Naive thymus-derived CD8-positive, alpha-beta T cell (primary cell): ENCODE measurements at regions of chr4 and their contacts with region 1.

Region 1: GRCh38 chr4:184538023-184538599 is 63.8 kb upstream of the IRF2 start:
- DNase-seq: peak; percentile 15 to 80 (median 62)
- ATAC-seq: peak; percentile 52 to 53
- H3K4me3 Mint-ChIP-seq: peak overlapping the region; percentile 90 to 99 (median 95)
- H3K27ac Mint-ChIP-seq: peak overlapping the region; percentile 90 to 100 (median 99)
- H3K4me1 Mint-ChIP-seq: peaks cover 19 to 43% (median 37%) of the 10 kb centered on the region in 4 donors
- H3K27me3 Mint-ChIP-seq: no peaks in the 10 kb centered on the region

Region 2: GRCh38 chr4:184263910-184264732 is 274.0 kb before region 1 on chr4:
- POLR2A ChIA-PET with region 1: interaction called, 20 read pairs
- DNase-seq: peak; percentile 82 to 95 (median 89)
- ATAC-seq: peak; percentile 75 to 87
- H3K4me3 Mint-ChIP-seq: no peak overlapping the region
- H3K27ac Mint-ChIP-seq: peak overlapping the region in 9 of 10 donors; percentile 19 to 77 (median 47)
- H3K4me1 Mint-ChIP-seq: peaks cover 9 to 41% (median 30%) of the 10 kb centered on the region in 4 donors
- H3K27me3 Mint-ChIP-seq: no peaks in the 10 kb centered on the region

Region 3: GRCh38 chr4:184583738-184584502 is 45.8 kb after region 1 on chr4:
- POLR2A ChIA-PET with region 1: no interaction called
- DNase-seq: no peak
- ATAC-seq: peak in 1 of 2 donors; percentile 42
- H3K4me3 Mint-ChIP-seq: no peak overlapping the region
- H3K27ac Mint-ChIP-seq: peak overlapping the region in 2 of 10 donors; percentile 23 to 42
- H3K4me1 Mint-ChIP-seq: peaks cover 0 to 14% (median 6%) of the 10 kb centered on the region in 4 donors
- H3K27me3 Mint-ChIP-seq: no peaks in the 10 kb centered on the region